Esophagus muscularis mucosa (tissue), 4 donors: ENCODE measurements at regions of chr1 and their contacts with region 1.

Region 1: DNA sequence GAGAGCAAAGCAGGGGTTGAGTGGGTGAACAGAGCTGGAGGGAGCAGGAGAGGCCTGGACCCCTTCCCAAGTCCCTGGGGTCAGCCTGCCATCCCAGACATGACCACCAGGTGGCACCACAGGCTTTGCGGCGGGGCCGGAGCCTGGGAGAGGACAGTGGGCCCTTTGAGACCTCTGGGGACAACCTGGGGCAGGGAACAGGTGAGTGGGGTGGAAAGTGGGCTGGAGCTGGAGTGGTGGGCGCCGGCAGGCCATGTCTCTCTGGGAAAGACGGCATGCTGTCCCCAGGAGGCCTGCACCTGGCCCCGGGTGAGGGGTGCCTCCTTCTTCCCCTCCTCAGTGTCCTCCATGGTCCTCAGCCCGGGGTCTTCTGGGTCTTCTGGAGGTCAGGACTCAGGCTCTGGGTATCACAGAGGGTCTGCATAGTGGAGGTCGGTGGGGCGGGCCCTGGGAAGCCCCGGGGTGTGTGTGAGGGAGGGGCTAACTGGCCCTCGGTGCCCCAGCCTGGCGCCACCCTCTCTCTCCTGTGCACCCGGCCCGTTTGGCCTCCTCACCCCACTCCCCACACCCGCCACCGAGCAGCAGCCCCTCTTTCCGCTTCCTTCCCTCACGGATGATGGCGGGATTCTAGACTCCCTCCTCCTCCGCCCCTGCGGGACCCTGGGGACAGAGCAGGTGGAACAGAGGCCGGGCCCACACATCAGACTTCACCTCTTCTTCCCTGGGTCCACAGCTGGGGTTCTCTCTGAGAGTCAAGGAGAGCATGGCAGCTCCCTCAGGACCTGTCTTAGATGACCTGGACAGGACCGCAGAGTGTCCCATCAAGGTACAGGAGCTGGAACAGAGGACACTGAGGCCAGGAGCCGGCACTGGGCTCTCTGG is 28.4 kb upstream of the PKP1 start:
- DNase-seq: peak; percentile 86
- H3K4me3 ChIP-seq: no peak overlapping the region
- H3K27ac ChIP-seq: no peak overlapping the region
- H3K4me1 ChIP-seq: peaks cover 4 to 7% (median 6%) of the 10 kb centered on the region in 4 donors
- H3K27me3 ChIP-seq: peaks cover 0 to 27% (median 1%) of the 10 kb centered on the region in 4 donors
- CTCF ChIP-seq: peak; percentile 89 to 99 (median 96)
- EP300 ChIP-seq: no peak
- POLR2A ChIP-seq: no peak

Region 2: GRCh38 chr1:200659269-200659668 is 595.6 kb before region 1 on chr1:
- intact Hi-C with region 1: no loop called
- DNase-seq: no peak
- H3K4me3 ChIP-seq: no peak overlapping the region
- H3K27ac ChIP-seq: no peak overlapping the region
- H3K4me1 ChIP-seq: peaks cover 0 to 13% (median 7%) of the 10 kb centered on the region in 4 donors
- H3K27me3 ChIP-seq: no peaks in the 10 kb centered on the region
- CTCF ChIP-seq: no peak
- EP300 ChIP-seq: no peak
- POLR2A ChIP-seq: no peak

Region 3: GRCh38 chr1:201361652-201362504 is 107.0 kb after region 1 on chr1:
- intact Hi-C with region 1: loop called (anchors 1 kb)
- DNase-seq: no peak
- H3K4me3 ChIP-seq: no peak overlapping the region
- H3K27ac ChIP-seq: no peak overlapping the region
- H3K4me1 ChIP-seq: peaks cover 0 to 11% (median 3%) of the 10 kb centered on the region in 4 donors
- H3K27me3 ChIP-seq: peaks cover 0 to 14% (median 0%) of the 10 kb centered on the region in 4 donors
- CTCF ChIP-seq: peak; percentile 64 to 75 (median 69)
- EP300 ChIP-seq: no peak
- POLR2A ChIP-seq: no peak

Region 4: GRCh38 chr1:201408176-201408833 is 153.4 kb after region 1 on chr1:
- intact Hi-C with region 1: loop called (anchors 5 kb)
- DNase-seq: no peak
- H3K4me3 ChIP-seq: no peak overlapping the region
- H3K27ac ChIP-seq: no peak overlapping the region
- H3K4me1 ChIP-seq: no peaks in the 10 kb centered on the region
- H3K27me3 ChIP-seq: no peaks in the 10 kb centered on the region
- CTCF ChIP-seq: peak; percentile 72 to 93 (median 89)
- EP300 ChIP-seq: no peak
- POLR2A ChIP-seq: no peak